ENCODE measurements at regions of chr2 and their contacts with region 1.

Region 1: GRCh38 chr2:220071696-220072095 is 444.3 kb downstream of the SLC4A3 start:
- DNase-seq: no peak
- H3K4me3 ChIP-seq: no peak overlapping the region
- H3K27ac ChIP-seq: no peak overlapping the region
- H3K4me1 ChIP-seq: peaks cover 0 to 6% (median 2%) of the 10 kb centered on the region in 4 donors
- H3K27me3 ChIP-seq: no peaks in the 10 kb centered on the region
- CTCF ChIP-seq: no peak

Region 2: GRCh38 chr2:221961561-221961960 is 1889.9 kb after region 1 on chr2:
- intact Hi-C with region 1: loop called (anchors 5 kb)
- DNase-seq: no peak
- H3K4me3 ChIP-seq: no peak overlapping the region
- H3K27ac ChIP-seq: no peak overlapping the region
- H3K4me1 ChIP-seq: no peaks in the 10 kb centered on the region
- H3K27me3 ChIP-seq: no peaks in the 10 kb centered on the region
- CTCF ChIP-seq: no peak